GM10248 (cell line): ENCODE measurements at regions of chr20 and their contacts with region 1.

Region 1: GRCh38 chr20:37192137-37192854 is 12.9 kb upstream of the MROH8 start:
- DNase-seq: peak; percentile 79
- CTCF ChIP-seq: peak; percentile 81

Region 2: GRCh38 chr20:37202267-37202943 is 10.1 kb after region 1 on chr20:
- CTCF ChIA-PET with region 1: interaction called, 34 read pairs
- POLR2A ChIA-PET with region 1: no interaction called
- DNase-seq: no peak
- CTCF ChIP-seq: peak; percentile 53

Region 3: GRCh38 chr20:37223053-37223452 is 30.8 kb after region 1 on chr20:
- CTCF ChIA-PET with region 1: interaction called, 20 read pairs
- POLR2A ChIA-PET with region 1: interaction called, 3 read pairs
- DNase-seq: peak; percentile 26
- CTCF ChIP-seq: no peak

Region 4: DNA sequence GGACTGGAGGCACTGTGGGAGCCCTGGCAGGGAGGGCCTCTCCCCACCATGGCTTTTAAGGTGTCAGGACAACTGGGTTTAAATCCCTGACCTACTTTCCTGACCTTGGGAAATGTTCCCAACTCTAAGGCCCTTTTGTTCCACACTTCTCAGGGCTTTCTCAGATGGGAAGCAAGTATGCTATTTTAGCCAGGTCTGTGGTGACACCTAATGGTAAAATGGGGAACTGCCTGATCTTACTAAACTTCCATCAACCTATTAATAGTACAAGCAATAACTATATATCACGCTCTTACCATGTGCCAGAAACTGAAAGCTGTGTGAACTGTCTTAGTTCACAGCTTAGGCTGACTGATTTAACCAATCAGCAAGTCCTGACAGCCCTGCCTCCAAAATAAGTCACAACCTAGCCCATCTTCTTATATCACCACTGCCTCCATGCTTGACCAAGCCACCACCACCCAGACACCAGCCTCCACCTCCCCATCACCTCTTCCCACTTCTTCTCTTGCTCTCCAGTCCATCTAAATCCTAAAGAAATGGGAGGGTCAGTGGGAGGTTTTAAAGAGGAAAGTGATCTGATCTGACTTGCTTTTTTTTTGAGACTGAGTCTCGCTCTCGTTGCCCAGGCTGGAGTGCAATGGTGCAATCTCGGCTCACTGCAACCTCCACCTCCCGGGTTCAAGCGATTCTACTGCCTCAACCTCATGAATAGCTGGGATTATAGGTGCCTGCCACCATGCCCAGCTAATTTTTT is 342.3 kb after region 1 on chr20:
- CTCF ChIA-PET with region 1: interaction called, 146 read pairs
- POLR2A ChIA-PET with region 1: no interaction called
- DNase-seq: peak; percentile 77
- CTCF ChIP-seq: peak; percentile 68